K562 (cell line): ENCODE measurements at regions of chr6 and their contacts with region 1.

Region 1: DNA sequence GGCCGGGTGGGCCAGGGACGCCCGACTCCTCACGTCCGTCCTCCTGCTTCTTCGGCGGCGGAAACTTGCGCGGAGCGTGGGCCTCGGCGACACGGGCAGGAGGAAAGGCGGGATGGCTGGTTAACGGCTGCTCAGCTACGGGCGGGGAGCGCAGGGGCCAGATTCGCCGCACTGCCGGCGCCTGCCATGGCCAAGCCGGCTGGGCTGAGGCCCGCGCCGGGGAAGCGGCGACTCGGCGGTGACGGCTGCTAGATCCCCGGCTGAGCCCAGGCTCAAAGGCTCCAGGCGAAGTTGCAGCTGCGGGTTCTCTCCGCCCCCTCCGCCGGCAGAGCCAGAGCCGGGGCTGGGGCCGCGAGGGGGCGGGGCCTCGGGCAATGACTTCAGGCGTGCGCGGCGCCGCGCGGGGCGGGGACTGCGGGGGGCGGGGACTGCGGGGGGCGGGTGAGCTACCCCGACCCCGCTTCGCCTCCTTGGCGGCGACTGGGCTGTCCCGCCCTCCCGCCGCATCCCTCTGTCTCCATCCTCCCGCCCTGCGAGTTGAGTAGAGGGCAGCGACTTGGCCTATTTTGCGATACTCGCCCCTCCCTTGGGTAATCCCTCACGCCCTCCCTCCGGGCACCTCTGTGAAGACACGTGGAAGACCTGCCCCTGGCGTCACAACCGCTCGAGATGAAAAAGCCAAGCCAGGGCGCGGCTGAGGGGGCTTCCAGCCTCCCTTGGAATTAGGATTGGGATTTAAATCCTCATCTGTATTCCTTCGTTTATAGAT is at the start of gene CEP85L:
- DNase-seq: peak; percentile 93 to 96 (median 96)
- ATAC-seq: peak; percentile 96
- H3K4me3 ChIP-seq: peak within 1 kb of the TSS; percentile 80
- H3K27ac ChIP-seq: peak within 1 kb of the TSS; percentile 92
- H3K4me1 ChIP-seq: peaks cover 14 to 17% of the 10 kb centered on the region in 2 experiments; a peak in 4 of 5 replicates
- H3K27me3 ChIP-seq: no peaks in the 10 kb centered on the region
- CTCF ChIP-seq: no peak
- EP300 ChIP-seq: no peak
- POLR2A ChIP-seq: peak; percentile 74
- RAD21 ChIP-seq: peak; percentile 2 to 12; a peak in 1 of 4 replicates
- polyA plus RNA-seq, gene CEP85L: 4.5 to 7.0 TPM

Region 2: DNA sequence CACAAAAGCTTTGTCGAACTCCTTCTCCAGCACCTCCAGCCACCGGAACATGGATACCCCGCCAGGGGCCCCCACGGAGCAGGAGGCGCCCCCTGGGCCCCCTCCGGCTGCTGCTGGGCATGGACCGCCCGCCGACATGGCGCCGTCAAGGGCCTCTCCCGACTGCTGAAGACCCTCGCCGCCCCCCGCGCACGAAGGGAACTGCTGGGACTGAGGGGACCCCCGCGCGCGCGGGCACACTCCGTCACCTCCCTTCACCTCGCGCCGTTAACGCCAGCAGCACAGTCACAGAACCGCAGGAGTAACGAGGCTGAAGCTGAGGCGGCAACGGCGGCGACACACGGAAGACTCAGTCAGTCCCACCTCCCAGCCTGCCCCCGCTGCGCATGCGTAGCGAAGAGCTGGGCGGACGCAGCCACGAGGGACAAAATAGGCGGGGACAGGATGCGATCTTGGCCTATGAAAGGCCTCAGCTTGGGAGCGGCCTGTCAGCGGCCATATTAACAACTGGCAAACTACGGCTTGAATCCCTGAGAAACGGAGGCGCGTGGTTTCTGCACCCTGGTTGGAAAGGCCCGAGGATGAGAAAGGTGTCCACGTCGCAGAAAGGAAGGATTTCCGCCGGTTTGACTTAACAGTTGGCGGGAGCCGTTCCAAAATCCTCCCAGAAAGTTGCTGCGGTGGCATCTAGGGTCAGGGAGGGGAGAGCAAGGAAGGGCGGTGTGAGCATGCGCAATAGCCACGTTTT is 1049.1 kb before region 1 on chr6 and contains the start of gene GOPC:
- CTCF ChIA-PET with region 1: no interaction called
- POLR2A ChIA-PET with region 1: no interaction called
- in situ Hi-C with region 1: no loop called
- intact Hi-C with region 1: no loop called
- DNase-seq: peak; percentile 96 to 98 (median 97)
- ATAC-seq: peak; percentile 93
- H3K4me3 ChIP-seq: peak within 1 kb of the TSS; percentile 74
- H3K27ac ChIP-seq: peak within 1 kb of the TSS; percentile 84
- H3K4me1 ChIP-seq: peaks cover 4 to 6% of the 10 kb centered on the region in 2 experiments; a peak in 3 of 5 replicates
- H3K27me3 ChIP-seq: no peaks in the 10 kb centered on the region
- CTCF ChIP-seq: peak; percentile 32 to 54 (median 37); a peak in 4 of 6 replicates
- EP300 ChIP-seq: no peak; the same call in 1 of the 2 replicates
- POLR2A ChIP-seq: peak; percentile 95
- RAD21 ChIP-seq: no peak; a peak in 1 of 4 replicates
- polyA plus RNA-seq, gene GOPC: 10.0 to 12.2 TPM

Region 3: DNA sequence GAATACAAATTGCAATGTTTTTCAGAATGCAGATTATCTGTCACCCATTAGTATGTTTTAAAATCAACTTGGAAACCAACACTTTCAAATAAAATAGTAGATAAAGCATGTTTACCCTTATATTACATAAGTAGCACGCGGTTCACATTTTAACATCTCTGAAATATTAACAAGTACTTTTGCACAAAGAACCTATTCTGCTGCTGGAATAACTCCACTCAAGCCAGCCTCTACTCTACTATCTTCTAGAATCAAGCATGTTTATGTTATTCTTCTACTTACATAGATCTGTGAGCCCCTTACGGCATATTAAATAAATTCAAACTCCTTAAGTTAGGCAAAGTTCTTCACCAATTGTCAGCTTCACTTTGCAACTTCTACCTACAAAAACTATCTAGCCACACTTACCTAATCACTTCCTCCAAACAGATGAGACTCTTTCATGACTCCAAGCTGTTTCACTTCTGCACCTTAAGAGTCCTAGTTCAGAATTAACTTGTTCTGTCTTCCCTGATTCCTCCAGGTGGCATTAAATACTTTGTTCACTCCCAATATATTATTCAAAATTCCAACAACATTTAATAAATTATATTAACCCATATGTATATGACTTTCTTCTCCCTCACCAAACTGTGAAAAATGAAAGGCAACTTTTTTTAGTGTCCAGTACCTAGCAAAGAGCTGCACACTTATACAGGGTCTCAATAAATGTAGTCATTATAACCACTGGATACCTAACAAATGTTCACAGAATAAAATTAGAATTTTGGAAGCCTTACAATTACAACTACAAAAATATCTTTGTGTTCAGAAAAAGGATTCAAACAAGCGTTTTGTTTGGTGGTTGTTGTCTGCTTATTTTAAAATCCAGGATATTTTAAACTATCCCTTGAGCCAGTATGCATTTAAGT is 12.2 kb before region 1 on chr6:
- CTCF ChIA-PET with region 1: interaction called, 4 read pairs
- POLR2A ChIA-PET with region 1: interaction called, 17 read pairs
- in situ Hi-C with region 1: no loop called
- intact Hi-C with region 1: loop called (anchors 1 kb)
- DNase-seq: no peak
- ATAC-seq: peak; percentile 33; the same call in 2 of the 3 replicates
- H3K4me3 ChIP-seq: no peak overlapping the region
- H3K27ac ChIP-seq: no peak overlapping the region
- H3K4me1 ChIP-seq: peaks cover 0 to 6% of the 10 kb centered on the region in 2 experiments; a peak in 2 of 5 replicates
- H3K27me3 ChIP-seq: no peaks in the 10 kb centered on the region
- CTCF ChIP-seq: no peak
- EP300 ChIP-seq: no peak
- POLR2A ChIP-seq: no peak
- RAD21 ChIP-seq: no peak

Region 4: DNA sequence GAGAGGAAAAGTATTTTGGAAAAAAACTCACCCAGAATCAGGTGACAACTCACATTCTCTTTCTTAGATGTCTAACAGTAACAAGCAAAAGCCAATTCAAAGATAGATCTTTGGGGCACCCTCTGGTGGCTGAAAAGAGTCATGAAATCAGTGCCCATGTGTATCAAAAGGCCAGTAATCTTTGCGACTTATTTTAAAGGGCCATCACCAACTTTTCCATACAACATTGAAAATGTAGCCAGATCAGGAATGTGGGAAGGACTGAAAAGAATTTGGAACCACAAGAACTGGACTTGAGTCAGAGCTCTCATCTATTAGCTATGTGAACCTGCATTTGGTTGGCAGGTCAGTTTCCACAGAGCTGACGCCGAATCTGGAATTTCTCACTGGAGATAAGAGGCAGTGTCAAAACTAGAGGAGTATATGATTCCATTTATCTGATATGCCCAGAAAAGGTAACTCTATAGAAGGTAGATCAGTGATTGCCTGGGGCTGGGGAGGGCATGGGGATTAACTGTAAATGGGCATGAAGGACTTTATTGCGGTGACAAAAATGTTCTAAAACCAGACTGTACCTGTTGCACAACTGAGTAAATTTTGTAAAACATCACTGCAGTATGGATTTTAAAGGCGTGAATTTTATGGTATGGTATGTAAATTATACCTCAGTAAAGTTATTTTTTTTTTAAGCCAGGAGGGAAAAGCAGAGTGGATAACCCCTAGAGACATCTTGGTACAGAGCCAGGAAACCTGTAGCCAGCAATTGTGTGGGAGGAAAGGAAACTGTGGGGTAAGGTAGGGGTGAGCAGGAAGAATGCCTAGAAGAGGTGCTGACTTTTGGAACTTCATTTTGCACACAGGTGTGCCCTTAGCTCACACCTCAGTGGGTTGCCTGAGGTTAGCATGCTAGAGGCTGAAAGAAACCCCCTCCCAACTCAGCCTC is 125.4 kb after region 1 on chr6:
- CTCF ChIA-PET with region 1: no interaction called
- POLR2A ChIA-PET with region 1: no interaction called
- in situ Hi-C with region 1: no loop called
- intact Hi-C with region 1: loop called (anchors 5 kb)
- DNase-seq: peak; percentile 60 to 74 (median 62)
- ATAC-seq: peak; percentile 87
- H3K4me3 ChIP-seq: no peak overlapping the region
- H3K27ac ChIP-seq: no peak overlapping the region
- H3K4me1 ChIP-seq: peaks cover 0 to 3% of the 10 kb centered on the region in 2 experiments; a peak in 1 of 5 replicates
- H3K27me3 ChIP-seq: peaks cover 13 to 16% of the 10 kb centered on the region in 2 experiments; a peak in 4 of 5 replicates
- CTCF ChIP-seq: peak; percentile 64 to 85 (median 67); a peak in 5 of 6 replicates
- EP300 ChIP-seq: no peak
- POLR2A ChIP-seq: no peak
- RAD21 ChIP-seq: peak; percentile 82 to 88